ENCODE measurements at regions of chr19 and their contacts with region 1.

Region 1: DNA sequence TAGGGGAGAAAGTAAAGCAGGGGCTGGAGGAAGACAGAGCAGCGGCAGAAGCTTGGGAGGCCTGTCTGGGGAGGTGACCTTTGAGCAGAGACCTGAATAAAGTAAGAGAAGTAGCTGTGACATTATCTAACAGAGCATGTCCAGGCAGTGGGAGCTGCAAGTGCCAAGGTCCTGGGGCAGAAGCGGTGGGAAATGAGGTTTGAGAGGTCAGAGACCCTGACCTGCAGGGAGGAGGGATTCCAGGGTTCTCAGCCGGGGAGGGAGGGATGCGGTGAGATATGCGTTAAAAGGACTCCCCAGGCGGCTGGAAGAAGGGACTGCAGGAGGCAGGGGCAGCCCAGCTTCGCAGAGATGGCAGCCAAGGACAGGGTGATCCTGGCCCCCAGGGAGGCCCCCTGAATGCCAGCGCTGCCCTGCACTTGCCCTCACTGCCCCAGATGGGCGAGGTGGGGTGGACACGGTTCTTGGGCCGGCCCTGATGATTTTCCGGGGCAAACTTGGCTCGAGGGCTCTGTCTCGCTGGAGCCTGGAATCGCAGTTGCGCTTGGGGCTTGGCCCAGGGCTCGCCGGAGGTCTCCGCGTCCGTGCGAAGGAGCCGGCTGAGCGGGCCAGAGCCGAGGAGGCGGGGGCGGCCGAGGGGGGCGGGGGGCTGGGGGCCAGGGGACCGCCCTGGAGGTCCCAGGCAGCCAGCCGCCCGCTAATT is 3.2 kb downstream of the CRLF1 start:
- DNase-seq: no peak
- H3K4me3 ChIP-seq: no peak overlapping the region
- H3K27ac ChIP-seq: no peak overlapping the region
- H3K4me1 ChIP-seq: peaks cover 8% of the 10 kb centered on the region
- H3K27me3 ChIP-seq: peaks cover 31% of the 10 kb centered on the region
- CTCF ChIP-seq: no peak

Region 2: GRCh38 chr19:18478569-18479311 is 124.7 kb before region 1 on chr19:
- CTCF ChIA-PET with region 1: no interaction called
- POLR2A ChIA-PET with region 1: interaction called, 19 read pairs
- intact Hi-C with region 1: no loop called
- DNase-seq: peak; percentile 55 to 79
- H3K4me3 ChIP-seq: no peak overlapping the region
- H3K27ac ChIP-seq: peak overlapping the region; percentile 36
- H3K4me1 ChIP-seq: peaks cover 22% of the 10 kb centered on the region
- H3K27me3 ChIP-seq: no peaks in the 10 kb centered on the region
- CTCF ChIP-seq: no peak

Region 3: GRCh38 chr19:18780631-18781030 is 177.2 kb after region 1 on chr19:
- CTCF ChIA-PET with region 1: interaction called, 10 read pairs
- POLR2A ChIA-PET with region 1: no interaction called
- intact Hi-C with region 1: no loop called
- DNase-seq: no peak
- H3K4me3 ChIP-seq: no peak overlapping the region
- H3K27ac ChIP-seq: no peak overlapping the region
- H3K4me1 ChIP-seq: no peaks in the 10 kb centered on the region
- H3K27me3 ChIP-seq: no peaks in the 10 kb centered on the region
- CTCF ChIP-seq: no peak